IMR-90 (cell line): ENCODE measurements at regions of chr18 and their contacts with region 1.

Region 1: GRCh38 chr18:22124970-22125369 is 44.4 kb upstream of the GATA6 start:
- DNase-seq: no peak
- ATAC-seq: no peak
- H3K4me3 ChIP-seq: no peak overlapping the region
- H3K27ac ChIP-seq: no peak overlapping the region
- H3K4me1 ChIP-seq: no peaks in the 10 kb centered on the region
- H3K27me3 ChIP-seq: peaks cover 14% of the 10 kb centered on the region
- CTCF ChIP-seq: no peak
- POLR2A ChIP-seq: no peak
- RAD21 ChIP-seq: no peak

Region 2: GRCh38 chr18:21593540-21594257 is 531.3 kb before region 1 on chr18:
- CTCF ChIA-PET with region 1: no interaction called
- POLR2A ChIA-PET with region 1: no interaction called
- dilution Hi-C with region 1: no loop called
- in situ Hi-C with region 1: no loop called
- intact Hi-C with region 1: no loop called
- DNase-seq: no peak
- ATAC-seq: no peak
- H3K4me3 ChIP-seq: no peak overlapping the region
- H3K27ac ChIP-seq: no peak overlapping the region
- H3K4me1 ChIP-seq: no peaks in the 10 kb centered on the region
- H3K27me3 ChIP-seq: no peaks in the 10 kb centered on the region
- CTCF ChIP-seq: no peak
- POLR2A ChIP-seq: no peak
- RAD21 ChIP-seq: no peak

Region 3: DNA sequence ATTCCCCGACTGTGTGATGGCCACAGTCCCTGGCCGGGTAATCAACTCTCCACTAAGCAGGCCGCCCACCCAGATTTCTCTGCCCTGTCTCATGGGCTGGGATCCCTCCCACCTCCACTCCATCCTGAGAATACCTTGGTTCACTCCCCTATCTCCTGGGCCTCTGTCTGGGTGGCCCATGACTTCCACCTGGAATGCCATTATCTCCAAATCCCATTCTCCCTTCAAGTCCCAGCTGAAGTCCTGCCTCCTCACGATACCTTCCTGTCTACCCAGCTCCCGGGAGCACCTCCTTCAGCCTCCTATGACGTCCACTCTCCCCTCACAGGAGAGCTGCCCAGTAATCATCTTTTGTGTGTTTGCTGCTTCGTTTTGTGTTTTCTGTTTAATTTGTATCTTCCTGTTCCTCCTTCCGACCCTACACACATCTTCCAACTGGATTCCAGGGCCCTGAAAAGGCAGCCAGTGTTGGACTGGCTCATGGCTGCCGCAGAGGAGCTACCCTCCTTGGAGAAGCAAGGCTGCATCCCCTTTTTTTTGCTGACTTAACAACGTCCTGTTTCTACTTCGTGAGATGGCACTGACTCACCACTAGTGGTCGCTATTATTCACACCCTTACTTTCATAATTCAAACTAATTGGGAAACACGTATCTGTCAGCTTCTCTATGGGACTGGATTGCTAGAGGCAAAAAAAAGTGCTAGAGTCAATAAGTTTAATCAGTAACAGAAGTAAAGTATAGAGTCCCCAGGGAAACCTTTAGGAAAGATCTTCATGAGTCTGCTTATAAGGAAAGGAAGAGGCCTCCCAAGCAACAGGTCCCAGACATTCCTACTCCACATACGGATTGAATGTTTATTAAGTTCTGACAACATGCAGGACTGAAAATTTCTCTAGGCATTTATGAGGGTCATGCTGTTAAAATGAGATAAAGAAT is 127.5 kb before region 1 on chr18:
- CTCF ChIA-PET with region 1: no interaction called
- POLR2A ChIA-PET with region 1: no interaction called
- dilution Hi-C with region 1: no loop called
- in situ Hi-C with region 1: no loop called
- intact Hi-C with region 1: no loop called
- DNase-seq: peak; percentile 42
- ATAC-seq: peak; percentile 84
- H3K4me3 ChIP-seq: no peak overlapping the region
- H3K27ac ChIP-seq: no peak overlapping the region
- H3K4me1 ChIP-seq: no peaks in the 10 kb centered on the region
- H3K27me3 ChIP-seq: peaks cover 8% of the 10 kb centered on the region
- CTCF ChIP-seq: peak; percentile 68
- POLR2A ChIP-seq: no peak
- RAD21 ChIP-seq: peak; percentile 49

Region 4: DNA sequence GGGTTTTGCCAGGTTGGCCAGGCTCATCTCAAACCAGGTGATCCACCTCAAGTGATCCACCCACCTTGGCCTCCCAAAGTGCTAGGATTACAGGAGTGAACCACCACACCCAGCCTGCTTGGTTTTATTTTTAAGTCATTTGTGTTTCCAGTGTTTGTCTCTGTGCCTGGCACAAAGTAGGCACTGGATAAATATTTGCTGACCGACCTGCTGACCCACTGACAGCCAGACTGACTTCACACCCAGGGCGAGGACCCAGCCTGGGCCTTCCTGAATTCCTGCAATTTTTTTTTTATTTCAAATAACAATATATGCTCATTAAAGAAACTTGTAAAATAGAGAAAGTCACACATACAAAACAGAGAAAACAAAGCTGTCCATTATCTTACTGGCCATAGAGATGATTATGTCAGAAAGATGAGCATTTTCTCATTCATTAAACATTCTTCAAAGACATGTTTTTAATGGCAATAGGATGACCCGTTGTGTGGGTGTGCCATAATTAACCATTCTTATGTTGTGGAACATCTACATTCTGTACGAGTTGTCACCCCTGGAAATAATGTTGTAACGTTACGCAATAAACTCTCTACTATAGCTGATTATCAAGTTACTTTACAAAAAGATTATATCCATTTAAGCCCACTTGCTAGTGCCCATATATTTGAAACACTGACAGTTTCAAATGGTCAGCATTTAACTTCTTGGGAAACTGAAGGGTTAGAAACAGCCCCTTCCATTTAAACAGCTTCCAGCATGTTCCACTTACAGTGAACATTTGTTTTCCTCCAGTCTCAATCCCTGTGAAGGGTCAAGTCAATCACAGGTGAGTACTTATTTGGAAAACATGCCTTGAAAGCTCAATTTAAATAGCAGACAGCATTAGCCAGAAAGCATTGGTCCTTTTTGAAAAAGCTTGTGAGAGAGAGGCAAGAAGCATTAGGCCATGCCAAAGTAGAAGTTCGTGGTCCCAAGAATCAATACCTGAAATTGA is 18.7 kb after region 1 on chr18:
- CTCF ChIA-PET with region 1: no interaction called
- POLR2A ChIA-PET with region 1: no interaction called
- dilution Hi-C with region 1: no loop called
- in situ Hi-C with region 1: no loop called
- intact Hi-C with region 1: loop called (anchors 1 kb)
- DNase-seq: no peak
- ATAC-seq: no peak
- H3K4me3 ChIP-seq: no peak overlapping the region
- H3K27ac ChIP-seq: no peak overlapping the region
- H3K4me1 ChIP-seq: no peaks in the 10 kb centered on the region
- H3K27me3 ChIP-seq: peaks cover 23% of the 10 kb centered on the region
- CTCF ChIP-seq: no peak
- POLR2A ChIP-seq: no peak
- RAD21 ChIP-seq: no peak